Cardiac septum (tissue), 1 donor: ENCODE measurements at regions of chr2 and their contacts with region 1.

Region 1: GRCh38 chr2:176001916-176002687 is at the start of gene LNPK:
- DNase-seq: peak; percentile 98
- total RNA-seq, gene LNPK: 44.0 TPM

Region 2: DNA sequence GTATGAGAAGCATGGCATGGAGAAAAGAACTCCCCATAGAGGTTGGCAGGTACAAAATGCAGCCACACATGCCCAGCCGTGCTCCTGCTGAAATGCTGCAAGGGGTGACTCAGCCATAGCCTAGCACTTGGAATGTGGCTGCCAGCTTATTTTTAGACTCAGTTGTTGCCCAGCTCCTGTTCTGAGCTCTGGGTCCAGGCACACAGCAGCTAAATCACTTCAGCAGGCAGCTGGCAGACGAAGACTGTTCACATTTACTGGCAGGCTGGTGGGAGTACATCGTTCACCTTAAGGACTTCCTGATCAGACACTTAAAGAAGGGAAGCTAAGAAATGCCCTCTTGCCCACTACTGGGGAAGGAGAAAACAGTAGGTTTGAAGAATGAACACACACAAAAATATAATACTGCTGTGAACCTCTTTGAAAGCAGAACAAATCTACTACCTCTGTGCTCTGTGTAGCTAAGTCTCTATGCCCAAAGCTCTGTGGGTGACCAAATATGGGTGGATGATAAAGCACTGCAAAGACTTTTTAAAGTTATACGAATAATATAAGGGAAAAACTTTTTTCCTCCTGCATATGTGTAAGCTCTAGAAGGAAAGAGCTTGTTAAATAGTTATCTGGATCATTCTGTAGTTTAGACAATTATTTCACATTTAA is 146.2 kb before region 1 on chr2:
- intact Hi-C with region 1: loop called (anchors 5 kb)
- DNase-seq: peak; percentile 79

Region 3: GRCh38 chr2:176039375-176039774 is 37.3 kb after region 1 on chr2:
- intact Hi-C with region 1: loop called (anchors 5 kb)
- DNase-seq: no peak

Region 4: DNA sequence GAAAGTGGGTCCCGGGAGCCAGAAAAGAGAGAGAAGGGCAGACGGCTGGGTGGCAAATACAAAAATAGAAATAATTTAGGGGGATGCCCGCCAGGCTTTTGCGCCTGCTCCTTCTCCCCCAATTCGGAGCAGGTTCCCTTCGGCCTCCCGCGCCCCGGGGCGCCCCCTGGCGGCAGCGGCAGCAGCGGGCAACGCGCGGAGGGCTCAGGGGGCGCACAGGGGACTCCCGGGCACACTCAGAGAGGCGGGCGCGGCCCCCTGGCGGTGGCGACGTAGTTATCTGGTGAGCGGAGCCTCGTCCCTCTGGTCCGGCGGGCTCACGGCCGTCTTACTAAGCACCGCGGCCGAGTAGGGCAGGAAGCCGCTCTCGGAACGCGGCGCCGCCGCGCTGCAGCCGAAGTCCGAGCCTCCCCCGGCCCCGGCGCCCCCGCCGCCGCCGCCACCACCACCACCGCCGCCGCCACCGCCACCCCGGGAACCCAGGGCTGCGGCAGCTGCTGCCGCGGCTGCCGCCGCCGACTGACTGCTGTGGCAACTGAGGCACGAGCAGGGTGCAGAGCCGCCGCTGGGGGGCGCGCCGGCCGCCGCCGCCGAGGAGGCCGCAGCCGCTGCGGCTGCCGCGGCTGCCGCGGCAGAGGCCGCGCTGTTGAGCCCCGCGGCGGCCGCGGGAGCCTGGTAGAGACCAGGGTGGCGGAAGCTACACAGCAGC is 77.9 kb after region 1 on chr2:
- intact Hi-C with region 1: loop called (anchors 2 kb)
- DNase-seq: no peak